Left colon (tissue), 2 donors: ENCODE measurements at regions of chr12 and their contacts with region 1.

Region 1: GRCh38 chr12:53746592-53747092 is 5.1 kb downstream of the CISTR start:
- DNase-seq: peak; percentile 84 to 93
- ATAC-seq: peak; percentile 91

Region 2: GRCh38 chr12:53543539-53543938 is 203.1 kb before region 1 on chr12:
- intact Hi-C with region 1: loop called in 1 of 2 experiments (anchors 5 kb)
- DNase-seq: peak; percentile 47 to 49
- ATAC-seq: peak; percentile 81

Region 3: DNA sequence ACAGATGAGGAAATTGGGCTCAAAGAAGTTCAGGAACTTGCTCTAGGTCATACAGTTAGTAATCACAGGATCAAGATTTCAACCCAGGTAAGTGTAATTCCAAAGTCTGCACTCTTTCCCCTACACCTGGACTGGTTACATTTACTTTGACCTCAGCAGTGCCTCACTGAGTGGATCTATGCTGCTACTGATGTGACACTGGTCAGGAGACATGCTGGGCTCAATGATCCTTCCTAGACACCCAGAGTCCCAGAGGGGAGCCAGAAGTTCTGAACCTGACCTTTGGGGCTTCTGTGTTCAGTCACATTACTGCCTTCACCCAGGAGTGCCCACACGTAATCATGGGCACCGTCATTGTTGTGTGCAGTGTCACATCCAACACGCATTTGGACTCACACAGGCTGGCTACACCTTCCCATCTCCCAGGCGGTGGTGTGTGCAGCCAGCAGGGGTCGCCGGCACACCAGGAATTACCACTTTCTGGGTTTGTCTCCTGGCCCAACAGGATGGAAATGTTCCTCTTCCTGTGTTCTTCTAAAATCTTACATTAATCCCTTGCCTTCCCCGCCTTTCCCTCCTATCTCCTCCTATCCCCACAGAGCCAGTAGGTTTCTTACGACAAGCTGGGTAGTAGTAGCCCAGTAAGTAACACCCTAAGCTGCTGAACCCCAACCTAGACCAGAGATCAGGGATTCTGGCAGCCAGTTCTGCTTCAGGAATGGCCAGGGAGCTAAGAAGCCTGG is 45.0 kb before region 1 on chr12:
- intact Hi-C with region 1: loop called in 1 of 2 experiments (anchors 5 kb)
- DNase-seq: peak; percentile 65 to 86
- ATAC-seq: peak; percentile 90